ENCODE measurements at regions of chr11 and their contacts with region 1.

Region 1: DNA sequence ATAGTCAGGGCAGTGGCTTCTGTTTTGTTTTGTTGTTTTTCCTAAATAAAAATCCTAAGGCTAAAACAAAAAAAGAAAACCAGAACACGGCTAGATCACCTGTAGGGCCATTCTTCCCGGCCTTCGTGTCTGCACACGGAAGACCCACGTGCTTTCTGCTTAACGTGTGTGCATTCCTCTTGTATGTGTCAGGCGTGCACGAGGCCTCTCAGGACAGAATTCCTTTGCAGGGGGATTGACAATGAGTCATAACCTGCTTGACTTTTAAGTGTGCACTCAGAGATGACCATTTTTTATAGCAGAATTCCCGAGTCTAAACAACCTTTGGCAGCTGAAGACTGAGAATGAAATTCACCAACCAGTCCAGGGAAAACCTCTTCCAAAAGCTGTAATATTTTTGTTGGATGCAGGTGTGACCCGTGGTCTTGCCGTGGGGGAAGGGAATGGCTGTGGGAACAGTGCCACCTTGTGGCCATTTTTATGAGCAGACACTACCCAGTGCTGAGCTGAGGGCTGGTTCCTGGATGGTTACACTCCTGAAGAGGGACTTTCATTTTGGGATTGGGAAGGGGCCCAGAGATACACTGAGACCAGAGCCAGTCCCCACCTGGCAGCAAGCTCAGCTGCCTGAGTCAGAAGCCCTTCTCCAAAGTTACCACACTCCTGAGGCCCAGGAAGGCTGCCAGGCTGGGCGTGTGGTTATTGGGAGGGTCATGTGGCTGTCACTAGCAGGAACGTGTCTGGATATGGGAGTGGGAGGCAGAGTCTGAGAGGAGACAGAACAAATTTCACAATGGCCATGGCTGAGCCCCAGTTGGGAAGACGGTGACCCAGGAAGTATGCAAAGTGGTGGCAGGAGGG is 35.8 kb upstream of the DKK3 start:
- DNase-seq: peak; percentile 94
- H3K4me3 Mint-ChIP-seq: peak overlapping the region; percentile 21
- H3K27ac Mint-ChIP-seq: peak overlapping the region; percentile 29
- H3K4me1 Mint-ChIP-seq: peaks cover 45% of the 10 kb centered on the region
- H3K27me3 Mint-ChIP-seq: no peaks in the 10 kb centered on the region
- CTCF ChIP-seq: peak; percentile 94

Region 2: DNA sequence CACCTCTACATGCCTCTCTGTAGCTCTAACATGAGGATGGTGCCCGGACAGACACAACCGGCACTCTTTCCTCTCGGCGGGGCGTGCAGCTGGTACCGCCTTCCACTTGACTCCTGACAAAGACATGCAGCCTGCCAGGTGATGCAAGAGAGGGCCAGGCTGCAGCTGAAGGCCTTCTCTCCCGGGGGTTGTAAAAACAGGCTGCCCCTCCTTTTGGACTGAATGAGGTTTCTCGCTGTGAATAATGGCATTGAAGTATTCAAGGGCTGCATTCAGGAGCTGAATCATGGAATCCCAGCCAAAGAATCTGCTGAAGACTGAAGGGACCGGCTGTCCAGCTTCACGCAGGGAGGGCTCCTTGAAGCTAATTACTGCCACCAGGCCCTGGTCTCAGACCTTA is 533.2 kb before region 1 on chr11:
- CTCF ChIA-PET with region 1: no interaction called
- POLR2A ChIA-PET with region 1: no interaction called
- intact Hi-C with region 1: no loop called
- DNase-seq: peak; percentile 20
- H3K4me3 Mint-ChIP-seq: no peak overlapping the region
- H3K27ac Mint-ChIP-seq: no peak overlapping the region
- H3K4me1 Mint-ChIP-seq: peaks cover 7% of the 10 kb centered on the region
- H3K27me3 Mint-ChIP-seq: no peaks in the 10 kb centered on the region
- CTCF ChIP-seq: no peak

Region 3: GRCh38 chr11:11787305-11788062 is 256.7 kb before region 1 on chr11:
- CTCF ChIA-PET with region 1: no interaction called
- POLR2A ChIA-PET with region 1: no interaction called
- intact Hi-C with region 1: loop called (anchors 2 kb)
- DNase-seq: peak; percentile 81
- H3K4me3 Mint-ChIP-seq: no peak overlapping the region
- H3K27ac Mint-ChIP-seq: no peak overlapping the region
- H3K4me1 Mint-ChIP-seq: peaks cover 26% of the 10 kb centered on the region
- H3K27me3 Mint-ChIP-seq: no peaks in the 10 kb centered on the region
- CTCF ChIP-seq: peak; percentile 87

Region 4: GRCh38 chr11:11931461-11932055 is 112.6 kb before region 1 on chr11:
- CTCF ChIA-PET with region 1: interaction called, 61 read pairs
- POLR2A ChIA-PET with region 1: interaction called, 15 read pairs
- intact Hi-C with region 1: loop called (anchors 1 kb)
- DNase-seq: peak; percentile 80
- H3K4me3 Mint-ChIP-seq: no peak overlapping the region
- H3K27ac Mint-ChIP-seq: no peak overlapping the region
- H3K4me1 Mint-ChIP-seq: no peaks in the 10 kb centered on the region
- H3K27me3 Mint-ChIP-seq: no peaks in the 10 kb centered on the region
- CTCF ChIP-seq: peak; percentile 80

Region 5: DNA sequence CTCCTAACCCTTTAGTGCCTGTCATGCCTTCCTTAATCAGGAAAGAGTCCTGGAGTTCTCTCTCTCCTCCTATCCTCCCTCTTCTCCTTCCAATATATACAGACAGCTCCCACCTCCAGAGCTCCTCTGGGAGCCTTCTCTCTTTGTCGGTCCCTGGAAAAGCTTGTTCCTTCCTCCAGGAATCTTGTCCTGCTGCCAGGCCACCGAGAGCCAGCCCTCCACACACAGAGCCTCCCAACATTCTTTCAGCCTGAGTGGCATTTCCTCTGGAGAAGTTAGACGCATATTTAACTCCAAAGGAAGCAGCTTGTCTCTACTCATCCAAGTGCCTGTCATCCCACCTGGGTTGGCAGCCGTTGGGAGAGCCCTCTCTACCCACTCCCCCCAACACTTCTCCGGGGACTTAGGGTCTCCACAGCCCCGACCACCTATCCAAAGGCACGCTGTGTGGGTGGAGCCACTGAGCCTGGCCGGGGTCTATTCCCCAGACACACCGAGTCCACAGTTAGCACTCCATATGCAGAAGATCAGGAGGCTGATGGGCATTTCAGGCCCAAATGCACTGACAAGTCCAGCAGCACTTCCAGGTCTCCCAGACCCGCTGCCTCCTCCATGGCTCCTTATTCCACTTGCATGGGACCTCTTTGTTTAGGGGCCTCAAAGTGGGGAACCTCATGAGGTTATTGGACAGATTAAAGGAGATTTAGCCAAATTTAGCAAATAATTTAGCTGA is 66.8 kb before region 1 on chr11:
- CTCF ChIA-PET with region 1: interaction called, 7 read pairs
- POLR2A ChIA-PET with region 1: interaction called, 11 read pairs
- intact Hi-C with region 1: no loop called
- DNase-seq: peak; percentile 86
- H3K4me3 Mint-ChIP-seq: peak overlapping the region; percentile 53
- H3K27ac Mint-ChIP-seq: peak overlapping the region; percentile 86
- H3K4me1 Mint-ChIP-seq: peaks cover 39% of the 10 kb centered on the region
- H3K27me3 Mint-ChIP-seq: no peaks in the 10 kb centered on the region
- CTCF ChIP-seq: no peak

Region 6: DNA sequence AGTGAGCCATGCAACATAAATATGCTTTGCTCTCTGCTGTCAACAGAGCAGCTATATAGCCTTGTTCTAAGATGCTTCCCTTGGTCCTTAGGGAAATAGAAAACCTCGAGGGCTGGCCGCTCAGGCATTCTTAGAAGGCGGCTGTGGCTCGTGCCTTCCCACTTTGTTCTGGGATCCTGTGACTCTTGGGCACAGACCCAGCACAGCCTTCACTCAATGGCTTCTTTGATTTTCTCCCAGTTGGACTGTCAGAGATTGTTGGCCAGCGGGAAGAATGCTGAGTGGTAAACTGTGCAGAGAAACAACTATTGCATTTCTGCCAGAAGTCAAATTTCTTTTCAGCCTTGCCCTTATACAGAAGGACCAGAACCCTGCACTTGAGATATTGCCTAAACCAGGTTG is 56.7 kb after region 1 on chr11:
- CTCF ChIA-PET with region 1: interaction called, 18 read pairs
- POLR2A ChIA-PET with region 1: no interaction called
- intact Hi-C with region 1: loop called (anchors 1 kb)
- DNase-seq: no peak
- H3K4me3 Mint-ChIP-seq: no peak overlapping the region
- H3K27ac Mint-ChIP-seq: no peak overlapping the region
- H3K4me1 Mint-ChIP-seq: peaks cover 11% of the 10 kb centered on the region
- H3K27me3 Mint-ChIP-seq: no peaks in the 10 kb centered on the region
- CTCF ChIP-seq: no peak

Region 7: GRCh38 chr11:12235947-12236743 is 192.0 kb after region 1 on chr11:
- CTCF ChIA-PET with region 1: interaction called, 71 read pairs
- POLR2A ChIA-PET with region 1: interaction called, 4 read pairs
- intact Hi-C with region 1: loop called (anchors 1 kb)
- DNase-seq: peak; percentile 73
- H3K4me3 Mint-ChIP-seq: no peak overlapping the region
- H3K27ac Mint-ChIP-seq: peak overlapping the region; percentile 55
- H3K4me1 Mint-ChIP-seq: peaks cover 16% of the 10 kb centered on the region
- H3K27me3 Mint-ChIP-seq: no peaks in the 10 kb centered on the region
- CTCF ChIP-seq: peak; percentile 72

Region 8: GRCh38 chr11:12318791-12319438 is 274.7 kb after region 1 on chr11:
- CTCF ChIA-PET with region 1: no interaction called
- POLR2A ChIA-PET with region 1: no interaction called
- intact Hi-C with region 1: no loop called
- DNase-seq: no peak
- H3K4me3 Mint-ChIP-seq: no peak overlapping the region
- H3K27ac Mint-ChIP-seq: no peak overlapping the region
- H3K4me1 Mint-ChIP-seq: no peaks in the 10 kb centered on the region
- H3K27me3 Mint-ChIP-seq: no peaks in the 10 kb centered on the region
- CTCF ChIP-seq: no peak